Esophagus muscularis mucosa (tissue), 4 donors: ENCODE measurements at regions of chr14 and their contacts with region 1.

Region 1: GRCh38 chr14:67704484-67705089 is 2.9 kb downstream of the RDH12 start:
- DNase-seq: no peak
- H3K4me3 ChIP-seq: no peak overlapping the region
- H3K27ac ChIP-seq: no peak overlapping the region
- H3K4me1 ChIP-seq: no peaks in the 10 kb centered on the region
- H3K27me3 ChIP-seq: no peaks in the 10 kb centered on the region
- CTCF ChIP-seq: peak; percentile 53 to 77 (median 72)
- EP300 ChIP-seq: no peak
- POLR2A ChIP-seq: no peak

Region 2: GRCh38 chr14:67426983-67427606 is 277.5 kb before region 1 on chr14:
- intact Hi-C with region 1: loop called (anchors 5 kb)
- DNase-seq: no peak
- H3K4me3 ChIP-seq: no peak overlapping the region
- H3K27ac ChIP-seq: no peak overlapping the region
- H3K4me1 ChIP-seq: peaks cover 0 to 13% (median 11%) of the 10 kb centered on the region in 4 donors
- H3K27me3 ChIP-seq: peaks cover 0 to 13% (median 2%) of the 10 kb centered on the region in 4 donors
- CTCF ChIP-seq: peak; percentile 67 to 84 (median 75)
- EP300 ChIP-seq: no peak
- POLR2A ChIP-seq: no peak

Region 3: GRCh38 chr14:67583711-67584644 is 120.6 kb before region 1 on chr14:
- intact Hi-C with region 1: loop called (anchors 10 kb)
- DNase-seq: no peak
- H3K4me3 ChIP-seq: no peak overlapping the region
- H3K27ac ChIP-seq: no peak overlapping the region
- H3K4me1 ChIP-seq: no peaks in the 10 kb centered on the region
- H3K27me3 ChIP-seq: no peaks in the 10 kb centered on the region
- CTCF ChIP-seq: peak; percentile 39 to 59 (median 50)
- EP300 ChIP-seq: no peak
- POLR2A ChIP-seq: no peak

Region 4: DNA sequence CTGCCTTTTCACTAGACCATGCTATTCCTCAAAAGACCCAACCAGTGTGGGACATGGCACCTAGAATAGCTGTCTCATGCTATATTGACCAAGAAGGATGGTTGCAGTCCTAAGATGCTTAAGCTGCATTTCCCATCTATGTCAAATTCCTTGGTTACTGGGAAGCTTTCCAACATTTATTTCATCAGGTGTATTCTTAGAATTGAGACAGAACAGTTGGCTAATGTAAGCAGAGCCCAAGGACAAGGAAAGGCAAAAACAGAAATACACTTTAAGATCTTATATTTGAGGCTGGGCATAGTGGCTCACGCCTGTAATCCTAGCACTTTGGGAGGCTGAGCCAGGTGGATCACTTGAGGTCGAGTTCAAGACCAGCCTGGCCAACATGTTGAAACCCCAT is 60.2 kb before region 1 on chr14:
- intact Hi-C with region 1: no loop called
- DNase-seq: no peak
- H3K4me3 ChIP-seq: no peak overlapping the region
- H3K27ac ChIP-seq: peak overlapping the region; percentile 66 to 73 (median 67)
- H3K4me1 ChIP-seq: peaks cover 0 to 17% (median 11%) of the 10 kb centered on the region in 4 donors
- H3K27me3 ChIP-seq: no peaks in the 10 kb centered on the region
- CTCF ChIP-seq: no peak
- EP300 ChIP-seq: no peak
- POLR2A ChIP-seq: no peak